ENCODE measurements at regions of chr15 and their contacts with region 1.

Region 1: GRCh38 chr15:77543159-77543882 is 89.4 kb downstream of the LINGO1 start:
- DNase-seq: peak; percentile 96

Region 2: GRCh38 chr15:77024271-77025082 is 518.8 kb before region 1 on chr15:
- intact Hi-C with region 1: loop called (anchors 5 to 10 kb)
- DNase-seq: peak; percentile 90

Region 3: DNA sequence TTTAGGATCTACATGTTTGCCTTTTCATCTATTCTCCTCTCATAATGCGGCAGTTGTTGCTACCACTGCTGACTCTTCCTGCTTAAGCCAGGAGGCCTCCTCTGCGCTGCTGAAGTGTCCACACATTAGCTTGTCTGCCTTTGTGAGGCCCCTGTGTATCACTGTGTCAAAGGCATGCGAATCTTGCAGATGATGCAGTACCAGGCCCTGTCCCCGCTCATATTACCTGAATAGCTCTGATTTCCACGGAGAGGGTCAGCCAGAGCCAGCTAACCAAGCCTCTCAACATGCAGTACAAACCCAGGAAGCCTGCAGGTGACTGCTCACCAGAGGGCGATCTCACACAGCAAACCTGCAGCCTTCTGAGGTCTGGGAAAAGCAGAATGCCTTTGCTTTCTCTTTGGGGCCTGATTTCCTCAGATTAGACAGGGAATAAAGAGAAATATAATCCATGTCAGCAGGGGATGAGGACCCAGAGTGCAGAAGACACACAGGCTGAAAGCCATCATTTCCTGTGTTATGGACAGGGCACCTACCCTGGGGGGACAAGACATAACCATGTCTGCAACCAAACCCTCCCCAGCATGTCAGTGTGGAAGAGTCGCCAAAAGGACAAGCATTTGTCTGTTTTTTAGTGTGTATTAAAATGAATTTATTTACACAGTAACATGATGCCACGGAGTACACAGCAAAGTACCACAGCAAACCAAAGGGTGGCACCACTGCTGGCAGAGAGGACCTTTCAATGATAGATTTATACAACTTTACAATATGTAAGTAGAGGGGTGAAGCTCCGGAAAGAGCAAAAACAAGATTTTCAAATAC is 435.6 kb before region 1 on chr15:
- intact Hi-C with region 1: loop called in 1 of 2 experiments (anchors 5 kb)
- DNase-seq: no peak

Region 4: GRCh38 chr15:77118882-77119321 is 424.4 kb before region 1 on chr15:
- intact Hi-C with region 1: loop called in 1 of 2 experiments (anchors 2 kb)
- DNase-seq: no peak

Region 5: DNA sequence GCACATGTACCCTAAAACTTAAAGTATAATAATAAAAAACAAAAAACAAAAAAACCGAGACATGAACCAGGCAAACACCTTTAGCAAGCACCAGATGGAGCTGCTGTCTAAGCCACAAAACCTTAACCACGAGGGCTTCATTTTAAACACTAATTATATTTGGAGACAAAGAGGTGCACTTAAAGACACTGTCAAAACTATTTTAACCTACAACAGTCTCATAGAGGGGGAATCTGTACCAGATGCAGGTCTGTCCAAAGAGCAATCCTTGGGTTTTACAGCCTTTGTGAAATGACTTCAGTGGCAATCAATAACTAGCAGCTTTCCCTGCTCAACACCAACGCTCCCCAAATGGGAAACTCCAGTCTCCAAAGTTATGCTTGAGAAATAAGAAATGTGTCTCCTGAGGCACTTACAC is 356.7 kb before region 1 on chr15:
- intact Hi-C with region 1: loop called in 1 of 2 experiments (anchors 10 kb)
- DNase-seq: no peak

Region 6: DNA sequence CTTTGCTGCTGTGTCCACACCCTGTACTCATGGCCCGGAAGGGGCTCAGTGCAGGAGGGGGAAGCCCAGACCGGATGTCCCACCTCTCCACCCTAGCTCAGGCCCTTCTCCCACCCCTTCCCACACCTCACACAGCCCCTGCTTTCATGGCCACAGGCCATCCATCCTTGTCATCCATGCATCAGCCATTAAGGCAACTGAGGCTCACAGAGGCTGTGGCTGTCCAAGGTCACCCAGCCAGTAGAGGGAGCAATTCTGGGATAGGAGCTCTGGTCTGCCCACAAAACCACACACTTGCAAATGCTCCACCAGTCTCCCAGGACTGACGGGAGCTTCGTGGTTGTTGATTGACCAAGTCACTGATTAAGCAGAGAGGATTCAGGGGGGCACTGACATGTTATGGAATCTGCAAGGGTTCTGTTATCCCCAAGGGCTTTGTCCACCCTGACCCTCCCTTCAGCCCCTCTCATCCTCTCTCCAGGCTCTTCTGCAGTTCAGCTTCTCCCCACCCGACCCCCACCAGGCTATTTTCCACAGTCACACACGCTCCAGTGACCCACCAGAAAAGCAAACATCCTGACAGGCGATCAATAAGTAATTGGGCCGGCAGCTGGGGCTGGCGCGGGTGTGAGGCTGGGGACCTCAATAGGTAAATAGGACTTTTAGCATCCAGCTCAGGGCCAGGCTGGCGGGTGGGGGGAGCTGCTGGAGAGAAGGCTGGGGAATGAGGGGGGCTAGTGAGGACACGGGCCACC is 74.3 kb after region 1 on chr15:
- intact Hi-C with region 1: no loop called
- DNase-seq: no peak